ENCODE measurements at regions of chr3 and their contacts with region 1.

Region 1: DNA sequence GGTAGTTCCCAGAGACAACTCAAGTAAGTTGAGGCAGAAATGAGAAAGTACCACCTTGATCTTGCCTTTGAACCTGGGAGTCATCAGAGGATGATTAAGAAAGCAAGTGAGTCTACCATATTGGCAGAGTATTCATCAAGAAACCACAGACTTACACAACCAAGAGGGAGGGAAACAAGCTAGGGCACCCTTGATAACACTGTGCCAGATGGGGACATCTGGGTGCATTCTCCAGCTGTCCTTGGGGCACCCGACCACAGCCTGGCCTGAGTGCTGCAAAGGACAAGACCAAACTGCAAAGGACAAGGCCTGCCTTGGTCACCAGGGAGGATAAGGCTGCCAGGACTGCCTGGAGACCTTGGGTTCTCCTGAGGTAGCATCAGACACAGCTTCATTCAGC is 553.6 kb downstream of the EPHB1 start:
- DNase-seq: no peak

Region 2: DNA sequence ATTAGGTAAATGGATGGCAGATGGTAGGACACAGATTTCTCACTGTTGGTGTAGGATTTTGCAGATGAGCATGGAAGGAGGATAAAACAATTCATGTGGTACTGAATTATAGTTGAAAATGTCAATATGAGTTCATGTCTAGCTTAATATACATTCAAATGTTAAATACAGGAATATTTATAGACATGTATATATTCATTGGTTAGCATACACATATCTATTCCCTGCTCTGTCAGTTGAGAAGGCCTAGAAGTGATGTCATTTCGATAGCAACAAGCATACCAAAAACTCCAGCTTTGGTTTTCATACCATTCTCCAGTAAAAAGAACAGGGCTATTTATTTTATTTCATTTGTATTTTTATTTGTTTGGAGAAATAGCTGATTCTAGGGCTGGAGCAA is 56.5 kb before region 1 on chr3:
- intact Hi-C with region 1: no loop called
- DNase-seq: no peak

Region 3: GRCh38 chr3:135374571-135374970 is 25.9 kb after region 1 on chr3:
- intact Hi-C with region 1: loop called in 1 of 2 experiments (anchors 1 kb)
- DNase-seq: no peak

Region 4: DNA sequence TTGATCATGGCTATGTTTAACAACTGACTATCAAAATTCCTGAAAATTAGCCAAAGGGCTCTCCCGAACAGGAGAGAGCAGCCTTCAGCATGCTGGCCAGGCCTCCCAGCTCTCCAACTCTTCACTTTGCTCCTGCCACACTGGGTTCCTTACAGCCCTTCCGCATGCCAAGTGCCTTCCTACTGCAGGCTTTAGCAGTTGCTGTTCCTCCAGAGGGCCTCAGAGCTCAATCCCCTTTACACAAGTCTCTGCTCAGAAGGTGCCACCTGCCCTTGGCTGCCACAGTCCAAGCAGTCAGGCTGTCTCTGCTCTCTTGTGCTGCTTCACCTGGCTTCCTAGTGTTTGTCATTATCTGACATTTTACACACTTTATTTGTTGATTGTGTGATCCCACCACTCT is 63.8 kb after region 1 on chr3:
- intact Hi-C with region 1: no loop called
- DNase-seq: no peak